ENCODE measurements at regions of chr11 and their contacts with region 1.

Region 1: DNA sequence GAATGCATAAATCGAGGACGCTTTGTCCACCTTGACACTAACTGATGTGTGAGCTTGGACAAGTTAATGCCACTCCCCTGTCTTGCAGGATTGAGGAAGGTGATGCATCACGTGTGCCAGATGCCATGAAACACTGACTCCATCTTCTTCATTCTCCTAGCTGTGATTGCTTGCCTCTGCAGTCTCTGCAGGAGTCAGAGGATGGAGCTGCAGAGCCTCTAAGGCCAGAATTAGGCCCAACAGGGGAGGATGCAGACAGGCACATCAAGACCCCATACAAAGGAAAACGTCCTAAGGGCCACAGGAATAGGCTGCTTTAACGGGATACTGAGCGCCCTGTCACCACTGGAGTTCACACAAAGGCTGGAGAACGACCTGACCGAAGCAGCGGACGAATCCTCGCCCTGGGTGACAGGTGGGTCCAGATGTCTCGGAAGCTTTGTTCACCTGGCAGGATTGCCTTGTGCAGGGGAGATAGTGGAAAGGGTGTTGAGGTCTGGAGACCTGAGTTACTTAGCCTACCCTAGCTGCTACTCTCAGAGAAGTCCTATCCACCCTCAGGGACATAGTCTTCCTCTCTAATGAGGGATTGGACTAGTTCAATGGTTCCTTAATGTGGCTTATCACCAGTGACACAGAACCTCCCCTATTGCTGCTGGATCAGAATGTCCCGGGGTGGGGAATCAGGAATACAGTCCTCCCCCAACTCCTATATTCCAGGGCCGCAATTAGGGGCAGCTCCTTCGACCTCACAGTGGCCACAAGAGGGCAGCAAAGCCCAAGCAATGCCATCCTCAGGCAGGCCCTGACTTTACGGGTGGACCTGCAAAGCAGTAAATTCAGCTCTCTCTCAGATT is 32.4 kb downstream of the DBX1 start:
- DNase-seq: peak; percentile 71 to 76
- ATAC-seq: peak; percentile 69 to 85 (median 78)
- H3K4me3 ChIP-seq: no peak overlapping the region
- H3K27ac ChIP-seq: no peak overlapping the region
- H3K4me1 ChIP-seq: peaks cover 0 to 10% (median 7%) of the 10 kb centered on the region in 9 donors
- H3K27me3 ChIP-seq: peaks cover 0 to 17% (median 0%) of the 10 kb centered on the region in 7 donors
- CTCF ChIP-seq: peak; percentile 76 to 89 (median 84)

Region 2: DNA sequence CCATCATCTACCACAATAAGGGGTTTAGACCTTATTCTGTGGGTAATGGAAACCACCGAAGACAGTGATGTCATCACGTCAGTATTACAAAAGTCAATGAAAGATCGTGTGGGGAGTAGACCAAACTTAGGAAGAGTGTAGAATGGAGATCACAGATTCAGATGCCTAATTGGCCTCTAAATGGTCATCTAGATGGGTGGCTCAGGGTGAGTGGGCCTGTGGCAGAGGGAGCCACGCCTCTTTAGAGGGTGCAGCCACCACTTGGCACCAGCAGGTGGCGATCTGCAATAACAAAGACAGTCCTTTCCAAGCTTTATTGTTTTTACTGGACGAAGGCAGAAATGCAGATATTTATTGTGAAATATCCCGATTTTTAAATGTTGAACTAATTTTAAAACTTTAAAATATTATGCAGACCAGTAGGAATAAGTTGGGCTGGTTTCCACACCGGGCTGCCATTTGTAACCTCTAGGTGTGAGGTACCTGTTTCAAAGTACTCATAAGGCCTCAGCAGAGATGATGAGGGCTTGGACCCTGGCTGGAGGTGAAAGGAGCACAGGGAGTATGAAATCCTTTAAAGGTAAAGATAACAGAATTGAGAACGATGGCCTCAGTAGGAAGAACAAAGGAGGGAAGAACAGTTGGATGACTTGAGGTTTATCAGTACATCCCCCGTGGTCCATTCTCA is 189.6 kb before region 1 on chr11:
- intact Hi-C with region 1: loop called in 1 of 10 experiments (anchors 5 kb)
- DNase-seq: peak; percentile 29 to 31
- ATAC-seq: peak in 5 of 8 donors; percentile 50 to 61 (median 57)
- H3K4me3 ChIP-seq: no peak overlapping the region
- H3K27ac ChIP-seq: no peak overlapping the region
- H3K4me1 ChIP-seq: peaks cover 0 to 16% (median 0%) of the 10 kb centered on the region in 9 donors
- H3K27me3 ChIP-seq: no peaks in the 10 kb centered on the region
- CTCF ChIP-seq: peak; percentile 66 to 86 (median 77)

Region 3: GRCh38 chr11:20337526-20338154 is 209.7 kb after region 1 on chr11:
- intact Hi-C with region 1: loop called in 1 of 10 experiments (anchors 5 kb)
- DNase-seq: no peak
- ATAC-seq: no peak
- H3K4me3 ChIP-seq: no peak overlapping the region
- H3K27ac ChIP-seq: no peak overlapping the region
- H3K4me1 ChIP-seq: peaks cover 0 to 3% (median 0%) of the 10 kb centered on the region in 9 donors
- H3K27me3 ChIP-seq: peaks cover 0 to 65% (median 53%) of the 10 kb centered on the region in 7 donors
- CTCF ChIP-seq: peak in 7 of 9 donors; percentile 24 to 55 (median 35)

Region 4: DNA sequence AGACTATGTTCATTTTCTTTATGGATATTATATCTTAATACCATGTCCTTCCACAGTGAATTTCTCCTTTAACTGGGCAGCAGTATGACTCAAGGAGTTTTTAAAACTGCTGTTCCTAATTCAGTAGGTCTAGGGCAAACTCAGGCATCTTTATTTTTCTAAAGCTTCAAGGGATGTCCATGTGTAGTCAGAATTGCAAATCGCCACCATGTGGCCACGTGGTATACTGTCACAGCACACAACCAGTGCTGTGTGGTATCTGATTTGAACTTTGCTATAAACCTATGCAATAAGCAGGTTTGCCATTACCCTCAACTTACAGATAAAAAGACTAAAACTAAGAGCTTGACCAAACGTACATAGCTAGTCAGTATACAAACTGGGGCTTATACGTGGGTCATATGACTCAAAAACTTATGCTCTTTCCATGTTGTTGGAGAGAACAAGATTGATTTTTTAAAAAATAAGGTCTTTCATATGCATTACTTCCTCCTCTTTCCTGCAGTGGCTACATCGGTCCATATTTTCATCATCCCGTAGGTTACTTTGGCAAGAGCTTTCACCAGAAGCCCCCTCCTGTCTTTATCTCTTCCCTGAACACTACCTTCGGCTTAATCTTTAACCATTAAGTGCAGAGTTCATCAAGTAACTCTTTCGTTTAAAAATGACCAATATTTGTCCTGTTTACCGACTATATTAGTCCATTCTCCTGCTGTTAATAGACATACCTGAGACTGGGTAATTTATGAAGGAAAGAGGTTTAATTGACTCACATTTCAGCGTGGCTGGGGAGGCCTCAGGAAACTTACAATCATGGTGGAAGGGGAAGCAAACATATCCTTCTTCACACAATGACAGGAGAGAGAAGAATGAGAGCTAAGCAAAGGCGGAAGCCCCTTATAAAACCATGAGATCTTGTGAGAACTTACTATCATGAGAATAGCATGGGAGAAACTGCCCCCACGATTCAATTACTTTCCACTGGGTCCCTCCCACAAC is 227.6 kb after region 1 on chr11:
- intact Hi-C with region 1: loop called (anchors 1 to 5 kb)
- DNase-seq: no peak
- ATAC-seq: peak in 3 of 8 donors; percentile 54 to 72 (median 63)
- H3K4me3 ChIP-seq: no peak overlapping the region
- H3K27ac ChIP-seq: no peak overlapping the region
- H3K4me1 ChIP-seq: peaks cover 0 to 14% (median 0%) of the 10 kb centered on the region in 9 donors
- H3K27me3 ChIP-seq: peaks cover 0 to 17% (median 0%) of the 10 kb centered on the region in 7 donors
- CTCF ChIP-seq: peak; percentile 13 to 58 (median 50)

Region 5: GRCh38 chr11:20609727-20610707 is 482.1 kb after region 1 on chr11:
- intact Hi-C with region 1: loop called in 2 of 10 experiments (anchors 5 to 10 kb)
- DNase-seq: peak; percentile 64 to 78
- ATAC-seq: peak; percentile 88 to 96 (median 94)
- H3K4me3 ChIP-seq: peak overlapping the region in 2 of 10 donors; percentile 3 to 23
- H3K27ac ChIP-seq: no peak overlapping the region
- H3K4me1 ChIP-seq: peaks cover 0 to 8% (median 0%) of the 10 kb centered on the region in 9 donors
- H3K27me3 ChIP-seq: peaks cover 10 to 90% (median 78%) of the 10 kb centered on the region in 7 donors
- CTCF ChIP-seq: peak; percentile 70 to 98 (median 95)